ENCODE measurements at regions of chr6 and their contacts with region 1.

Region 1: GRCh38 chr6:87756858-87757257 is 54.8 kb upstream of the AKIRIN2 start:
- DNase-seq: peak; percentile 94
- H3K4me3 ChIP-seq: peak overlapping the region; percentile 23
- H3K27ac ChIP-seq: peak overlapping the region; percentile 78
- H3K4me1 ChIP-seq: peaks cover 49% of the 10 kb centered on the region
- CTCF ChIP-seq: no peak

Region 2: GRCh38 chr6:87791029-87791428 is 34.2 kb after region 1 on chr6:
- CTCF ChIA-PET with region 1: no interaction called
- POLR2A ChIA-PET with region 1: interaction called, 14 read pairs
- intact Hi-C with region 1: loop called (anchors 1 kb)
- DNase-seq: no peak
- H3K4me3 ChIP-seq: no peak overlapping the region
- H3K27ac ChIP-seq: no peak overlapping the region
- H3K4me1 ChIP-seq: peaks cover 61% of the 10 kb centered on the region
- CTCF ChIP-seq: no peak

Region 3: GRCh38 chr6:87846434-87846833 is 89.6 kb after region 1 on chr6:
- CTCF ChIA-PET with region 1: no interaction called
- POLR2A ChIA-PET with region 1: no interaction called
- intact Hi-C with region 1: no loop called
- DNase-seq: no peak
- H3K4me3 ChIP-seq: no peak overlapping the region
- H3K27ac ChIP-seq: no peak overlapping the region
- H3K4me1 ChIP-seq: peaks cover 10% of the 10 kb centered on the region
- CTCF ChIP-seq: no peak

Measured in OCI-LY7 (cell line).